ENCODE measurements at regions of chr14 and their contacts with region 1.

Region 1: DNA sequence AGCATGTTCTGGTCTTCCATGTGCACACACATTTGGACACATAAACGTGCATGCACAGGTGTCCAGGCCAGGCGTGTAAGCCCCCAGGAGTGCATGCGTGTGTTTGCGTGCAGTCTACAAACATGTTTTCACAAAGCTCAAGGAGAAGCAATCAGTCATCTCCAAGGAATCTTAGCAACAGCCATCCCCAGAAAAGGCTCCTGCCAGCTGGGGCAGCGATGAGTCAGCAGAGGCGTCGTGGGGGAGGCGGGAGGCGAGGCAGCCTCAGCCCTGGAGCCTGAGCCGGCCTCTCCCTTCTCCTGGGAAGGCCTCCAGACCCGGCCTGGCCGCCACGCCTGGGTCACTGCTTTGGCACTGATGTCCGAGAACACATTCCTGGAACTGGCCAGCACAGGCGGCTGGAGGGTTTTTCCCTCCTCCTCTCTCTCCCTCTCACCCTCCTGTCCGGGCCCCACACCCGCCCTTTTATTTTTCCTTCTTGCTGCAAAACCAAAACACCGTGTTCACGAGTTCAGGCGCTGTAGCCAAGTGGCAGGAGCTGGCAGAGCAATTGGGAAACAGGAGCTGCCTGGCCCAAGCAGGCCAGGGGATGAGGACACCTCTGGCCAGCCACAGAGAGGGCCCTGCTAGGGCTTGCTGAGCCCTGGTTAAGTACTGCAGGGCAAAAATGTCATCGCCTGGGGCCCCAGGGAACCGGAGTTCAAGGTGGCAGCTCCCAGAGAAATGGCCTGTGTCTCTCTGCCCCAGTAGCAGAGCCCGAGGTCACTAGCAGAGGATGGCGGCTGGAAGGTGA is 92.7 kb downstream of the LRRC74A start:
- DNase-seq: peak; percentile 96 to 100
- H3K4me3 ChIP-seq: peak overlapping the region in 1 of 2 donors; percentile 19
- H3K27ac ChIP-seq: peak overlapping the region; percentile 84 to 88
- H3K4me1 ChIP-seq: peaks cover 10 to 62% (median 50%) of the 10 kb centered on the region in 4 donors
- H3K27me3 ChIP-seq: no peaks in the 10 kb centered on the region
- CTCF ChIP-seq: peak; percentile 26 to 27

Region 2: GRCh38 chr14:76872796-76873432 is 46.0 kb before region 1 on chr14:
- intact Hi-C with region 1: no loop called
- DNase-seq: peak in 1 of 2 donors; percentile 44
- H3K4me3 ChIP-seq: no peak overlapping the region
- H3K27ac ChIP-seq: no peak overlapping the region
- H3K4me1 ChIP-seq: no peaks in the 10 kb centered on the region
- H3K27me3 ChIP-seq: peaks cover 0 to 32% of the 10 kb centered on the region in 2 donors
- CTCF ChIP-seq: peak; percentile 83 to 85

Region 3: GRCh38 chr14:77028384-77029231 is 109.7 kb after region 1 on chr14 and contains the start of gene IRF2BPL:
- intact Hi-C with region 1: loop called (anchors 5 kb)
- DNase-seq: peak; percentile 99
- H3K4me3 ChIP-seq: peak within 1 kb of the TSS; percentile 82 to 94
- H3K27ac ChIP-seq: peak within 1 kb of the TSS; percentile 97 to 99
- H3K4me1 ChIP-seq: peaks cover 0 to 64% (median 53%) of the 10 kb centered on the region in 4 donors
- H3K27me3 ChIP-seq: no peaks in the 10 kb centered on the region
- CTCF ChIP-seq: no peak

Region 4: GRCh38 chr14:77053046-77053841 is 134.3 kb after region 1 on chr14:
- intact Hi-C with region 1: loop called (anchors 5 kb)
- DNase-seq: peak; percentile 73 to 82
- H3K4me3 ChIP-seq: no peak overlapping the region
- H3K27ac ChIP-seq: peak overlapping the region; percentile 80 to 85
- H3K4me1 ChIP-seq: peaks cover 0 to 32% (median 17%) of the 10 kb centered on the region in 4 donors
- H3K27me3 ChIP-seq: no peaks in the 10 kb centered on the region
- CTCF ChIP-seq: peak; percentile 87 to 92

Measured in tibial artery (tissue), 4 donors.